ENCODE measurements at regions of chr16 and their contacts with region 1.

Region 1: DNA sequence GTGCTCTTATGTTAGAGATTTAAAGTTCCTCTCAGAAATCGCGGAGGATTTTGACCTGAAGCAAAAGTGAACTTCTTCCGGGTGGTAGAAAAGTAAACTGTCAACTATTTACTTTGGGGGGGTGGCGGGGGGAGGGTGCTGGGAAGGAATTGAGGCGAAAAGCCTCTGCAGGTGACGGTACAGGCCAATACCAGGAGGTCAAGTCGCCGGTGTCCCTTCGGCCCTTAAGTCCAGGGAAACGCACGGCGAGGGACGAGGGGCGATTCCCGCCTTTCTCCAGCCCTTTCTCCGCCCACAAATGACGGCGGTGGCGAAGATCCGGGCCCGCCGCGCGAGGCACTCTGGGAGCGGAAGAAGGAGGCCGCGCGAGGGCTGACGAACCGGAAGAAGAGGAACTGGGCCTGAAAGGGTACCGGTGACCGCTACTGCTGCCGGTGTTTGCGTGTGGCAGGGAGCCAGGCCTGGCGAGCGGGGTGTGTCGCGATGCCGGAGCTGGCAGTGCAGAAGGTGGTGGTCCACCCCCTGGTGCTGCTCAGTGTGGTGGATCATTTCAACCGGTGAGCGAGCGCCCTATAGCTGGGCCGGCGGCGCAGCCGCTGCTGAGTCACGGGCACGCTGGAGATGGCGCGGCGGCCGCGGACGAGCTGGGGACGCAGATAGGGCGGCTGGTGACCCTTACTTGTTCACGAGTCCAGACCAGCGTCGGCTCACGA is at the start of gene PSMD7:
- DNase-seq: peak; percentile 89 to 91 (median 91)
- H3K4me3 ChIP-seq: peak within 1 kb of the TSS; percentile 43 to 88
- H3K4me3 Mint-ChIP-seq: peak within 1 kb of the TSS; percentile 86 to 98 (median 92)
- H3K27ac ChIP-seq: peak within 1 kb of the TSS; percentile 91
- H3K27ac Mint-ChIP-seq: peak within 1 kb of the TSS; percentile 89 to 98 (median 96)
- H3K4me1 ChIP-seq: peaks cover 34% of the 10 kb centered on the region
- H3K4me1 Mint-ChIP-seq: peaks cover 10 to 50% (median 31%) of the 10 kb centered on the region in 4 donors
- H3K27me3 ChIP-seq: no peaks in the 10 kb centered on the region
- H3K27me3 Mint-ChIP-seq: no peaks in the 10 kb centered on the region
- total RNA-seq, gene PSMD7: 67.0 to 68.6 TPM

Region 2: DNA sequence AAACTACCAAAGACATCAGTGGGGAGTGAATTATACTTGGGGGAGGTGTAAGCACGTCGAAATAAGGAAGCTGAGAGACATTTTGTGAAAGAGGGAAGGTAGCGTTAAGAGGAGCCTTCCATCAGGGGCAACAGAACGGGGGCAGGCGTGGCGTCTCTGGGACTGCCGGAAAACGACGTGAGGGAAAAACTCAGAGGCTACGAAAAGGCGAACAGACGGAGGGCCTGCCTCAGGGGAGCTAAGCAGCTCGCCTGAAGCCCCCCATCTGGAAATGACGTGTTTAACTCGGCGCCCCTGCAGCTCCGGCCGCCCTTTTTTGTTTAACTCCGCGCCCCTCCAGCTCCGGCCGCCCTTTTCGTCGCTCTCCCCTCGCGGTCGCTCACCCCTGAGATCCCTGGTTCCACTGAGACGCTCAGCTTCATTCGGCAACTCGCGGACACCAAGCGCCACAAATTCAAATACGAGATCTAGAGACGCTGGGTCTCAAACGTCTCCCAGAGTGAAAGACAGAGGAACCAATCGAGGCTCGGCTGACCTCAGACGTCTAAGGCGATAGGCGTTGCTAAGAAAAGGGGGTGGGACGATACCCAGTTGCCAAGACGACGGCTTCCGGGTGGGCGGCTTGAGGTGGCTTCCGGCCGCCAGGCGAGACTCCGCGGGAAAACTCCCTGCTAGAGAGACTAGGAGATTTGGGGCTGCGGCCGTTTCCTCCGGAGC is 1631.9 kb before region 1 on chr16:
- CTCF ChIA-PET with region 1: no interaction called
- POLR2A ChIA-PET with region 1: no interaction called
- intact Hi-C with region 1: loop called (anchors 10 kb)
- DNase-seq: peak; percentile 91 to 95 (median 92)
- H3K4me3 ChIP-seq: peak overlapping the region; percentile 67 to 76
- H3K4me3 Mint-ChIP-seq: peak overlapping the region; percentile 99 to 100 (median 100)
- H3K27ac ChIP-seq: peak overlapping the region; percentile 64
- H3K27ac Mint-ChIP-seq: peak overlapping the region; percentile 78 to 100 (median 99)
- H3K4me1 ChIP-seq: peaks cover 18% of the 10 kb centered on the region
- H3K4me1 Mint-ChIP-seq: peaks cover 7 to 24% (median 16%) of the 10 kb centered on the region in 4 donors
- H3K27me3 ChIP-seq: no peaks in the 10 kb centered on the region
- H3K27me3 Mint-ChIP-seq: peaks cover 0 to 2% of the 10 kb centered on the region in 2 donors

Region 3: GRCh38 chr16:74216319-74216718 is 80.3 kb before region 1 on chr16:
- CTCF ChIA-PET with region 1: no interaction called
- POLR2A ChIA-PET with region 1: no interaction called
- intact Hi-C with region 1: no loop called
- DNase-seq: no peak
- H3K4me3 ChIP-seq: no peak overlapping the region
- H3K4me3 Mint-ChIP-seq: no peak overlapping the region
- H3K27ac ChIP-seq: no peak overlapping the region
- H3K27ac Mint-ChIP-seq: no peak overlapping the region
- H3K4me1 ChIP-seq: no peaks in the 10 kb centered on the region
- H3K4me1 Mint-ChIP-seq: no peaks in the 10 kb centered on the region
- H3K27me3 ChIP-seq: no peaks in the 10 kb centered on the region
- H3K27me3 Mint-ChIP-seq: peaks cover 5 to 10% of the 10 kb centered on the region in 2 donors

Region 4: GRCh38 chr16:74309789-74310781 is 13.5 kb after region 1 on chr16:
- CTCF ChIA-PET with region 1: interaction called, 21 read pairs
- POLR2A ChIA-PET with region 1: interaction called, 19 read pairs
- intact Hi-C with region 1: no loop called
- DNase-seq: peak in 4 of 5 donors; percentile 21 to 37 (median 25)
- H3K4me3 ChIP-seq: no peak overlapping the region
- H3K4me3 Mint-ChIP-seq: no peak overlapping the region
- H3K27ac ChIP-seq: no peak overlapping the region
- H3K27ac Mint-ChIP-seq: peak overlapping the region in 2 of 7 donors; percentile 31 to 88
- H3K4me1 ChIP-seq: no peaks in the 10 kb centered on the region
- H3K4me1 Mint-ChIP-seq: peaks cover 0 to 3% (median 1%) of the 10 kb centered on the region in 4 donors
- H3K27me3 ChIP-seq: no peaks in the 10 kb centered on the region
- H3K27me3 Mint-ChIP-seq: no peaks in the 10 kb centered on the region

Region 5: GRCh38 chr16:74666425-74667254 is 370.1 kb after region 1 on chr16 and contains the start of gene RFWD3:
- CTCF ChIA-PET with region 1: no interaction called
- POLR2A ChIA-PET with region 1: interaction called, 11 read pairs
- intact Hi-C with region 1: loop called (anchors 5 kb)
- DNase-seq: peak; percentile 95 to 99 (median 98)
- H3K4me3 ChIP-seq: peak within 1 kb of the TSS; percentile 73 to 96
- H3K4me3 Mint-ChIP-seq: peak within 1 kb of the TSS; percentile 91 to 100 (median 96)
- H3K27ac ChIP-seq: peak within 1 kb of the TSS; percentile 89
- H3K27ac Mint-ChIP-seq: peak within 1 kb of the TSS; percentile 91 to 98 (median 96)
- H3K4me1 ChIP-seq: peaks cover 33% of the 10 kb centered on the region
- H3K4me1 Mint-ChIP-seq: peaks cover 20 to 52% (median 38%) of the 10 kb centered on the region in 4 donors
- H3K27me3 ChIP-seq: no peaks in the 10 kb centered on the region
- H3K27me3 Mint-ChIP-seq: no peaks in the 10 kb centered on the region
- total RNA-seq, gene RFWD3: 59.2 to 64.7 TPM

Region 6: GRCh38 chr16:74984535-74985296 is 688.1 kb after region 1 on chr16 and contains the start of gene WDR59:
- CTCF ChIA-PET with region 1: no interaction called
- POLR2A ChIA-PET with region 1: no interaction called
- intact Hi-C with region 1: loop called (anchors 2 kb)
- DNase-seq: peak; percentile 97 to 100 (median 99)
- H3K4me3 ChIP-seq: peak within 1 kb of the TSS; percentile 90 to 96
- H3K4me3 Mint-ChIP-seq: peak within 1 kb of the TSS; percentile 93 to 98 (median 96)
- H3K27ac ChIP-seq: peak within 1 kb of the TSS; percentile 87
- H3K27ac Mint-ChIP-seq: peak within 1 kb of the TSS; percentile 84 to 99 (median 95)
- H3K4me1 ChIP-seq: peaks cover 18% of the 10 kb centered on the region
- H3K4me1 Mint-ChIP-seq: peaks cover 8 to 29% (median 19%) of the 10 kb centered on the region in 4 donors
- H3K27me3 ChIP-seq: no peaks in the 10 kb centered on the region
- H3K27me3 Mint-ChIP-seq: no peaks in the 10 kb centered on the region
- total RNA-seq, gene WDR59: 116 to 127 TPM

Region 7: DNA sequence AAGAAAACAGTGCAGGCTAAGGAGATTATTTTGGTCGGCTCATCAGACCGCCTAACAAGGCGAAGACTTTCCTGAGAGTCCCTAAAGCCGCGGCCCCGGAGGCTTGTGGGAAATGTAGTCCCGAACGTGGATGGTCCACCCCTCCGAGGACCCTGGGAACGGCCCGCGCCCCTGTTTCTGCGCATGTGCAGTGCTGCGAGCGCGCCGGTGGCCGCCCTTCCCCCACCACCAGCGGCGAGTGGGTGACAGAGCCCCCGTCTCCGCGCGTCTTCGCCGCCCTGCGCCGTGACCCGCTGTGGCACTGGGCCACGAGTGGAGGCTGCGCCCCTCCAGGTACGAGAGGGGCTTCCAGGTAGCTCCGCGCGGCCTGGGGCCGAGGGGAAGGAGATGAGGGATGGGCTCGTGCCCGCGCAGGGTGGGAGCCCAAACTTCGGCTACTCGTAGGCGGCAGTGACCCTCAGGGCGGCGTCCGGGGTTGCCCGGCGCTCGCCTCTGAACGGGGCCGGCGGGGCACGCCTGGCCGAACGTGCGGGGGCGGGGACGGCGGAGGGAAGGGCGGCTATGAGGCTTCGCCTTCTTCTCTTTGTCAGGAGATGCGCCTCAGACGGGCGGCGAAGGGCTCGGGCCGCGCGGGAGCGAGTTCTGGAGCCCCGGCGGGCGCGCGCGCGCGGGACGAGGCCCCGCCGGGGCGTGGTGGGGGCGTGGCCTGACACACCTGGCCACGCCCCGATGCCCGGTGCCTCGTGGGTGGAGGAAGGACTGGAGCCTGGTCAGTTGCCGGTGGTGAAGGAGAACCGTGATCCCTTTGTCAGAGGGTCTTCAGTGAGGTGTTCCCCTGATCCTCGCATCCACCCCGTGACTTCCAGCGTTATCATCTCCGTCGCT is 852.0 kb after region 1 on chr16 and contains the start of gene ZFP1:
- CTCF ChIA-PET with region 1: no interaction called
- POLR2A ChIA-PET with region 1: no interaction called
- intact Hi-C with region 1: loop called (anchors 2 kb)
- DNase-seq: peak; percentile 92 to 96 (median 93)
- H3K4me3 ChIP-seq: peak within 1 kb of the TSS; percentile 44 to 95
- H3K4me3 Mint-ChIP-seq: peak within 1 kb of the TSS; percentile 82 to 91 (median 88)
- H3K27ac ChIP-seq: peak within 1 kb of the TSS; percentile 75
- H3K27ac Mint-ChIP-seq: peak within 1 kb of the TSS; percentile 75 to 93 (median 91)
- H3K4me1 ChIP-seq: peaks cover 5% of the 10 kb centered on the region
- H3K4me1 Mint-ChIP-seq: peaks cover 8 to 23% (median 13%) of the 10 kb centered on the region in 4 donors
- H3K27me3 ChIP-seq: no peaks in the 10 kb centered on the region
- H3K27me3 Mint-ChIP-seq: no peaks in the 10 kb centered on the region
- total RNA-seq, gene ZFP1: 11.7 to 13.4 TPM

Region 8: DNA sequence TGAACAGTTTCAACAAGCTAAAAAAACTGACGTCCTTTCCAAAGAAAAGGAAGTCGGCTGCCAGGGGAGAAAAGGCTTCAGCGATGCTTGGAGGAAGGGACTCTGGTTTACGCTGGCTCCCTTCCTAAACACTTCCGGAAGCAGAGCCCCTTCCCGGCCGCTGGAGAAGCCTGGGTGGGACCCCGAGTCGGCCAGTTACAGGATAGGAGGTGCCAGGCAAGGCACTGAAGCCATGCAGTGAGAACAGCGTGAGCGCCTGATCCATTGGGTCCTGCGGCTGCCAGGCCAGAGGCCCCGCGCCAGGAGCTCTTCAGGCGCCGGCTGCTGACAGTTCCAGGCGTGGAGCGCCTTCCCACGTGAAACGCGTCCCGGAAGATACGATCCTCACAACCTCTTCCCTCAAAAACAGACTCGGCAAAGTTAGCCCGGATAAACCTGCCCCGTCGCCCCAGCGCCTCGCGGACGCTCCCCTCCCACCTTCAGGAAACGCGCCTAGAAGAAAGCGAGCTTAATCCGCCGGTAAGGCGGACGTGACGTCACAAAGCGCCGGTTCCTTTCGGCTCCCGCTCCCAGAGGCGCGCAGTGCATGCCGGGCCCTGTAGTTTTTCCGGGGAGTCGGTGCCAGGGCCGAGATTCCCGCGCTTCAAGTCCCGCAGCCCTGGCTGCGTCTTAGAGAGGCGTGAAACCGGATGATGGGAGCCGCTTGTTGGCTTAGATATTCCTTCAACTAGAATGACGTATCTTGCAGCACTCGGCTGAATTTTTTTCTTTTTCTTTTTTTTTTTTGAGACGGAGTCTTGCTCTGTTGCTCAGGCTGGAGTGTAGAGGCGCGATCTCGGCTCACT is 1326.4 kb after region 1 on chr16 and contains the start of gene ADAT1:
- CTCF ChIA-PET with region 1: no interaction called
- POLR2A ChIA-PET with region 1: no interaction called
- intact Hi-C with region 1: loop called (anchors 1 kb)
- DNase-seq: peak; percentile 95 to 99 (median 98)
- H3K4me3 ChIP-seq: peak within 1 kb of the TSS; percentile 86 to 90
- H3K4me3 Mint-ChIP-seq: peak within 1 kb of the TSS; percentile 90 to 98 (median 97)
- H3K27ac ChIP-seq: peak within 1 kb of the TSS; percentile 96
- H3K27ac Mint-ChIP-seq: peak within 1 kb of the TSS; percentile 97 to 99 (median 98)
- H3K4me1 ChIP-seq: peaks cover 59% of the 10 kb centered on the region
- H3K4me1 Mint-ChIP-seq: peaks cover 46 to 87% (median 58%) of the 10 kb centered on the region in 4 donors
- H3K27me3 ChIP-seq: no peaks in the 10 kb centered on the region
- H3K27me3 Mint-ChIP-seq: peaks cover 0 to 3% of the 10 kb centered on the region in 2 donors
- total RNA-seq, gene ADAT1: 88.3 to 93.9 TPM